Heart right ventricle (tissue), 16 donors: ENCODE measurements at regions of chr19 and their contacts with region 1.

Region 1: GRCh38 chr19:54102421-54103169 is at the start of gene NDUFA3:
- DNase-seq: peak; percentile 97 to 98
- ATAC-seq: peak; percentile 99 to 100 (median 100)
- H3K4me3 ChIP-seq: peak within 1 kb of the TSS; percentile 70 to 99 (median 88)
- H3K27ac ChIP-seq: peak within 1 kb of the TSS; percentile 68 to 91 (median 83)
- H3K4me1 ChIP-seq: peaks cover 0 to 30% (median 15%) of the 10 kb centered on the region in 9 donors
- H3K27me3 ChIP-seq: peaks cover 0 to 8% (median 0%) of the 10 kb centered on the region in 7 donors
- CTCF ChIP-seq: no peak
- total RNA-seq, gene NDUFA3: 239 to 518 (median 360) TPM

Region 2: DNA sequence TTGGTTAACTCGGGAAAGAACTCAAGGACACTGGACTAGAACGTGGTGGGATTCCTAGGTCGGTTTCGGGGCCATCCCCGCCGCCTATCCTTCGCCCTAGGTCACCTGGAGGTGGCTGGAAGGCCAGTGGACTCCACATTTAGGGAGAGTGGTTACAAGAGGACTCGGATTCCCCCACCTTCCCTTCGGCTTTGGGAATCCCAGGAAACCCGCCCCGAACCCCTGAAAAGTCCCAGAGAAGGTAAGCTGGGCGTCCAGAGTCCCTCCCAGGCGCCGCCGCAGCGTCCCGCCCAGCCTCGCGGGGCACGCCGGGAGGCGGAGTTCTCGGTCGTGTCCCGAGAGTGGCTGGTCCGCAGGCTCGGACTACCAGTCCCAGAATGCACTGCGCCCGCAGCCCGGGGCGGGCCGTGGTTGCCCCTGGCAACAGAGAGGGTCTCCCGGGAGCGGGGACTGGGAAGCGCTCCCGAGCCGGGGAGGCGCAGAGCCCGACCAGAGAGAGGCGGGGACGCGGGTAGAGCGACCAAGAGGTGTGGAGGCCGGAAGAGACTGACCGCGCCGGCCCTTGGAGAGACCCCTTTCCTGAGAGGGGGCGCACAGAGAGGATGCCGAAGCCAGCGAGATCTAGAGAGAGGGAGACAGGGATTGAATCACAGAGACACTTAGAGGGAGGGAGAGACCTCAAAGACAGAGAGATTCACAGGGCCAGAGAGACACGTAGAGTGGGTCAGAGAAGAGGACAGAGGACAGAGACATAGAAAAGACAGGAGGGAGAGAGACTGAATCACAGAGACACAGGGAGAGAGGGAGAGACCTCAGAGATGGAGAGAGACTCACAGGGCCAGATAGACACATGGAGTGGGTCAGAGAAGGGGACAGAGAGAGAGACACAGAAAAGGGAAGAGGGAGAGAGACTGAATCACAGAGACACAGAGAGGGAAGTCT is 223.2 kb before region 1 on chr19:
- intact Hi-C with region 1: loop called in 1 of 10 experiments (anchors 10 kb)
- DNase-seq: peak; percentile 95 to 96
- ATAC-seq: peak; percentile 96 to 100 (median 98)
- H3K4me3 ChIP-seq: peak overlapping the region; percentile 40 to 71 (median 60)
- H3K27ac ChIP-seq: peak overlapping the region in 6 of 10 donors; percentile 16 to 55 (median 22)
- H3K4me1 ChIP-seq: peaks cover 5 to 59% (median 22%) of the 10 kb centered on the region in 9 donors
- H3K27me3 ChIP-seq: peaks cover 15 to 49% (median 44%) of the 10 kb centered on the region in 7 donors
- CTCF ChIP-seq: no peak

Region 3: DNA sequence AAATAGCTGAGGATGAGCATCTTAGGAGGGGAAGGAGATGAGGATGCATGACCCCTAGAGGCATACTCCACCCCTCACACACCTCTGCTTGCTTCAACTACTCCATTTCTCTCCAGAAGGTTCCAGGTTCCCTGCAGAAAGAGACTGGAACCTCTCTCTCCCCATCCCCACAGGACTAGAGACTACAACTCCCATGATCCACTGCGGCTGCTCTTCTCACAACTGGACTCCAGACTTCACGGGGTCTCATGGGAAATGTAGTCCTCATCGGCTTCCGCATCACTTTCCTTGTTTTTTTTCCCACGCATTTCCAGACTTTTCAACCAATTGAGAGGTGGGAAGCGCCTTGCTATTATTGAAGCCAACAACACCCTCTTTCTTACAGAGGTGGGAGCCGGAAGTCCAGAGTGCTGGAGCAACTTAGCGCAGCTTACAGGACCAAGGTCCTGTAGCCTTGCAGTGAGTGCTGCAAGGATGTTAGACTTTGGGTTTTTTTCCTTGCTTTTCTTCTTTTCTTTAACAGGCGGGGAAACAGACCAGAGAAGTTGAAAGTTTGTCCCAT is 125.1 kb before region 1 on chr19:
- intact Hi-C with region 1: loop called in 1 of 10 experiments (anchors 10 kb)
- DNase-seq: peak; percentile 44 to 90
- ATAC-seq: peak; percentile 64 to 89 (median 83)
- H3K4me3 ChIP-seq: peak overlapping the region in 9 of 10 donors; percentile 10 to 47 (median 40)
- H3K27ac ChIP-seq: peak overlapping the region in 4 of 10 donors; percentile 5 to 27 (median 24)
- H3K4me1 ChIP-seq: peaks cover 4 to 39% (median 22%) of the 10 kb centered on the region in 9 donors
- H3K27me3 ChIP-seq: peaks cover 7 to 74% (median 67%) of the 10 kb centered on the region in 7 donors
- CTCF ChIP-seq: no peak

Region 4: DNA sequence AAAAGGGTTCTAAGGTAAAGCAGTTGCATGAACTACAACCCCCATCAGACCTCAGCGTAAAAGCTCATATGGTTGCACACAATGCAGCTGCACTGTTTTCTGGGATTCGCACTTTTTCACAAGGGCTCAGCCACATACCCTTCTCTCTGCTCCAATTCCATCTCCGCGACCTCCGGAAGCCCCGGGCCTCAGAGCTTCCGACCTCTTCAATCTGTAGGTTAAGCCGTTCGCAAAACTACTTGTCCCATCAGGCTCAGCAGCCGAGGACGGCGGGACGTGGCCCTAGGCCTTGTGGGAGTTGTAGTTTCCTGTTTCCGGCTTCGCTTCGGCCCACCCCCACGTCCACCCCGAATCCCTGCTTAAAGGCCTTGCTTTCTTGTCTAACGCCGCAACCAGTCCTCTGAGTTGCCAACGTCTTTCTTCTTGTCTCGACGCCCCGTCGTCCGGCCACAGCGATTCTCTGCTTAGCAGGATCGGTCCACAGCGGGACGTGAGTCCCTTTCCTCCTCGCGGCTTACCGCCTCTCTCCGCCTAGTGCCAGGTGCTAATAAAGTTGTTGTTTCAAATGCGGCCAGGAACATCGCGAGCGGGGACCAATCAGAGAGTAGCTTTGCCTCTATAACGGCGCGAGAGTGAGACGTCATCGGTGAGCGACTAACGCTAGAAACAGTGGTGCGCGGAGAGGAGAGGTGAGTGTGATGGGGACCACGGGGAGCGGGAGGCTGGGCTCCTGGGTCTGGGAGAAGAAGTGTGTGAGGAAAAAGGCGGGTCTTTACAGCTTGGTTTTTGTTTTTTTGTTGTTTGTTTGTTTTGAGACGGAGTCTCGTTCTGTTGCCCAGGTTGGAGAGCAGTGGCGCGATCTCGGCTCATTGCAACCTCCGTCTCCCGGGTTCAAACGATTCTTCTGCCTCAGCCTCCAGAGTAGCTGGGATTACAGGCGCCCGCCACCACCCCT is 12.8 kb after region 1 on chr19 and contains the starts of genes PRPF31 and TFPT:
- intact Hi-C with region 1: loop called in 2 of 10 experiments (anchors 1 kb)
- DNase-seq: peak; percentile 92 to 98
- ATAC-seq: peak; percentile 93 to 97 (median 96)
- H3K4me3 ChIP-seq: peak within 1 kb of the TSS; percentile 62 to 95 (median 74)
- H3K27ac ChIP-seq: peak within 1 kb of the TSS; percentile 83 to 96 (median 92)
- H3K4me1 ChIP-seq: peaks cover 10 to 30% (median 26%) of the 10 kb centered on the region in 9 donors
- H3K27me3 ChIP-seq: no peaks in the 10 kb centered on the region
- CTCF ChIP-seq: no peak
- total RNA-seq, gene PRPF31: 35.9 to 46.4 (median 43.0) TPM
- total RNA-seq, gene TFPT: 11.0 to 16.8 (median 12.9) TPM

Region 5: GRCh38 chr19:55062734-55063492 is 960.3 kb after region 1 on chr19 and contains the start of gene RDH13:
- intact Hi-C with region 1: loop called in 1 of 10 experiments (anchors 10 kb)
- DNase-seq: peak; percentile 97 to 98
- ATAC-seq: peak; percentile 98 to 100 (median 99)
- H3K4me3 ChIP-seq: peak within 1 kb of the TSS; percentile 64 to 97 (median 93)
- H3K27ac ChIP-seq: peak within 1 kb of the TSS; percentile 57 to 94 (median 91)
- H3K4me1 ChIP-seq: peaks cover 0 to 31% (median 12%) of the 10 kb centered on the region in 9 donors
- H3K27me3 ChIP-seq: peaks cover 0 to 38% (median 0%) of the 10 kb centered on the region in 7 donors
- CTCF ChIP-seq: no peak
- total RNA-seq, gene RDH13: 32.4 to 72.0 (median 54.5) TPM